GM12878 (cell line): ENCODE measurements at regions of chr17 and their contacts with region 1.

Region 1: DNA sequence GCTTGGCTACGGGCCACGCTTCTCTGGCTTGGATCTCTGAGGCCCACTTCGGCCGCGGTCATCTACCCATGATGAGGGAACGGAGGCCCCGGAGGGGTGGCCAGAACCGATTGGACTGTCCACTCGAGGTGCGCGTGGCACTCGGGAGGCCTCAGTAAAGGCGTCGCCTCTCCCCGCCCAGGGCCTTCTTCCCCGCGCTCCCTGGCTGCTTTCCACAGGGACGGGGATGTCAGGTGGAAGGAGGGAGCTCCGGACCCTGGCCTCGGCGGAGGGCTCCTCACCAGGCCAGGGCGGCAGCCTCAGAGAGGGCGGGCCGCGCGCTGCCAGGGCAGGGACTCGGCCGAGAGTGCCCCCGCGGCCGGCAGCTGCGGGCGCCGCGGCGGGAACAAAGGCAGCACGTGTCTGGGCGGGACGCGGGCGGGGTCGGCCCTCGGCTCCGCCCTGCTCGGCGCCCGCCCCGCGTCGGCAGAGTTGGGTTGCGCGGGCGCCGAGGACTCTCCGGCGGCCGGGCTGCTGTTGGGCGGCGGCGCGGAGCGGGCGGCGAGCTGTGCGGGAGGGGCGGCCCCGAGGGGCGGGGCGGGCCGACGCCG is 587 bp upstream of the CDK5R1 start:
- DNase-seq: no peak
- ATAC-seq: peak; percentile 62
- H3K4me3 ChIP-seq: peak overlapping the region; percentile 28; the same call in 1 of the 2 replicates
- H3K27ac ChIP-seq: 0 out of 2 replicates have a peak overlapping the region, but pooled peaks have one; percentile 33
- H3K4me1 ChIP-seq: peaks cover 11% of the 10 kb centered on the region
- H3K27me3 ChIP-seq: no peaks in the 10 kb centered on the region
- CTCF ChIP-seq: no peak
- EP300 ChIP-seq: no peak
- POLR2A ChIP-seq: peak; percentile 32; the same call in 1 of the 2 replicates
- RAD21 ChIP-seq: no peak

Region 2: DNA sequence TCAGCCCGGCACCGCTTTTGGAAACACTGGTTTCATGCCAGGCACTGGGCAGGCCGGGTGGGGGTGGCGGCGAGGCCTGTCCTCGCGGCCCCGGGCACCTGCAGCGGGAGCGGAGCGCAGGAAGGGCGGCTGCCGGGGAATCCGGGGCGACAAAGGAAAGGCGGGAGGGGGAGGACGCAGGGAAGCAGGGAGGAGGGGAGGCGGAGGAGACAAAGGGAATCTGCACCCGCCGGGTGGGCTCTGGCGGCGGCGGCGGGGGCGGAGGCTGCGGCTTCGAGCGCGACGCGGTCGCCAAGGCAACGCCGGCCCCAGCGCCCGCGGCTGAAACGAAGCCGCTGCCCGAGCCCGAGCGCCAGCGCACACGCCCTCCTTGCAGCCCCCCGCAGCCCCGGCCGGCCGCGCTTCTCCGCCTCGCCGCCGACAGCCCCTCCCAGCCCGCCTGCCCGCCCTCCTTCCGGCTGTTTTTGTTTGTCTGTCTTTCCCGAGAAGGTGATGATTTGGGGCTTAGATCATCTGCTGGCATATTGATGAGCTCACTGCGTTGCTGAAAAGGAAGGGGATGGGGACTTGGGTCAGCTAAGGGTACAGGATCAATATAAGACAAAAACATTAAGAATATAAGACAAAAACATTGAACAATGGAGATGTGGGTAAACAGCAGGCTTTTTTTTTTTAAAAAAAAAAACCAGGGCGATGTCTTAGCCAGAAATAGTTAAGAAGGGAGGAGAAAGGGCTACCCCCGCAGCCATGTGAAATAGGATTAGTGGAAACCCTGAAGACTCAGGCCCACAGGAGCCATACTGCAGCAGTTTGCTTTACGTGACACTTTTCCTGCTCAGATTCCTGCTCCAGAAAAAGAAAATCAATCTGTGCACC is 33.3 kb after region 1 on chr17:
- CTCF ChIA-PET with region 1: interaction called, 83 read pairs
- POLR2A ChIA-PET with region 1: interaction called, 308 read pairs
- RAD21 ChIA-PET with region 1: interaction called, 543 read pairs
- SMC1A ChIA-PET with region 1: interaction called, 286 read pairs
- in situ Hi-C with region 1: no loop called
- intact Hi-C with region 1: loop called (anchors 1 kb)
- DNase-seq: no peak
- ATAC-seq: peak; percentile 38
- H3K4me3 ChIP-seq: peak overlapping the region; percentile 25; the same call in 1 of the 2 replicates
- H3K27ac ChIP-seq: peak overlapping the region; percentile 84
- H3K4me1 ChIP-seq: peaks cover 88% of the 10 kb centered on the region
- H3K27me3 ChIP-seq: no peaks in the 10 kb centered on the region
- CTCF ChIP-seq: no peak
- EP300 ChIP-seq: no peak
- POLR2A ChIP-seq: peak; percentile 61; the same call in 1 of the 2 replicates
- RAD21 ChIP-seq: no peak

Region 3: GRCh38 chr17:32569171-32570080 is 83.2 kb after region 1 on chr17:
- CTCF ChIA-PET with region 1: interaction called, 17 read pairs
- POLR2A ChIA-PET with region 1: interaction called, 16 read pairs
- RAD21 ChIA-PET with region 1: interaction called, 19 read pairs
- SMC1A ChIA-PET with region 1: interaction called, 16 read pairs
- in situ Hi-C with region 1: no loop called
- intact Hi-C with region 1: no loop called
- DNase-seq: peak; percentile 90
- ATAC-seq: peak; percentile 81
- H3K4me3 ChIP-seq: no peak overlapping the region
- H3K27ac ChIP-seq: peak overlapping the region; percentile 99
- H3K4me1 ChIP-seq: peaks cover 51% of the 10 kb centered on the region
- H3K27me3 ChIP-seq: no peaks in the 10 kb centered on the region
- CTCF ChIP-seq: 0 out of 6 replicates have a peak, but pooled peaks of 1 of the 3 experiments have one; percentile 5
- EP300 ChIP-seq: peak; percentile 36 to 50; a peak in 3 of 4 replicates
- POLR2A ChIP-seq: no peak
- RAD21 ChIP-seq: no peak; the same call in none of the 2 replicates

Region 4: DNA sequence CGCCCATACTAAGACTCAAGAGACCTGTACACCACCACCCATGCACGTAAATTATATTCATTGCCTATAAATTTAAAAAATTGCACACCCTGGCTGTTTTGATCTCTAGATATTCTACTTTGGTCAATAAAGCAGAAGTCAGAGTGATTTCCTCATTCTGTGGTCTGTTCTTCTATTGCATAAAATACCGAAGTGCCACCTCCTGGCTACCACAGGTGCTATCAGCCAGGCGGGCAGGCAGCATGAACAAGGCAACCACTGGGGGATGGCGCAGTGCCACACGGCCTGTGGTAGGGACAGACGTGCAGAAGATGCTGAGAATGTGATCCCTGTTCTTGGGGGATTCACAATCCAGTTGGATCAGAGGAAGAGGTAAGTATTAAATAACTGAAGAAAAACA is 122.9 kb after region 1 on chr17:
- CTCF ChIA-PET with region 1: interaction called, 132 read pairs
- POLR2A ChIA-PET with region 1: interaction called, 4 read pairs
- RAD21 ChIA-PET with region 1: interaction called, 40 read pairs
- SMC1A ChIA-PET with region 1: interaction called, 39 read pairs
- in situ Hi-C with region 1: no loop called
- intact Hi-C with region 1: loop called (anchors 1 kb)
- DNase-seq: peak; percentile 59
- ATAC-seq: peak; percentile 100
- H3K4me3 ChIP-seq: no peak overlapping the region
- H3K27ac ChIP-seq: no peak overlapping the region
- H3K4me1 ChIP-seq: peaks cover 7% of the 10 kb centered on the region
- H3K27me3 ChIP-seq: no peaks in the 10 kb centered on the region
- CTCF ChIP-seq: peak; percentile 73 to 88 (median 78)
- EP300 ChIP-seq: no peak; a peak in 1 of 4 replicates
- POLR2A ChIP-seq: no peak
- RAD21 ChIP-seq: peak; percentile 88

Region 5: GRCh38 chr17:32769839-32770238 is 283.6 kb after region 1 on chr17:
- CTCF ChIA-PET with region 1: interaction called, 24 read pairs
- POLR2A ChIA-PET with region 1: no interaction called
- RAD21 ChIA-PET with region 1: interaction called, 3 read pairs
- SMC1A ChIA-PET with region 1: interaction called, 12 read pairs
- in situ Hi-C with region 1: no loop called
- intact Hi-C with region 1: no loop called
- DNase-seq: no peak
- ATAC-seq: no peak
- H3K4me3 ChIP-seq: no peak overlapping the region
- H3K27ac ChIP-seq: no peak overlapping the region
- H3K4me1 ChIP-seq: no peaks in the 10 kb centered on the region
- H3K27me3 ChIP-seq: no peaks in the 10 kb centered on the region
- CTCF ChIP-seq: 0 out of 6 replicates have a peak, but pooled peaks of 1 of the 3 experiments have one; percentile 12
- EP300 ChIP-seq: no peak
- POLR2A ChIP-seq: no peak
- RAD21 ChIP-seq: 0 out of 2 replicates have a peak, but pooled peaks have one; percentile 5

Region 6: DNA sequence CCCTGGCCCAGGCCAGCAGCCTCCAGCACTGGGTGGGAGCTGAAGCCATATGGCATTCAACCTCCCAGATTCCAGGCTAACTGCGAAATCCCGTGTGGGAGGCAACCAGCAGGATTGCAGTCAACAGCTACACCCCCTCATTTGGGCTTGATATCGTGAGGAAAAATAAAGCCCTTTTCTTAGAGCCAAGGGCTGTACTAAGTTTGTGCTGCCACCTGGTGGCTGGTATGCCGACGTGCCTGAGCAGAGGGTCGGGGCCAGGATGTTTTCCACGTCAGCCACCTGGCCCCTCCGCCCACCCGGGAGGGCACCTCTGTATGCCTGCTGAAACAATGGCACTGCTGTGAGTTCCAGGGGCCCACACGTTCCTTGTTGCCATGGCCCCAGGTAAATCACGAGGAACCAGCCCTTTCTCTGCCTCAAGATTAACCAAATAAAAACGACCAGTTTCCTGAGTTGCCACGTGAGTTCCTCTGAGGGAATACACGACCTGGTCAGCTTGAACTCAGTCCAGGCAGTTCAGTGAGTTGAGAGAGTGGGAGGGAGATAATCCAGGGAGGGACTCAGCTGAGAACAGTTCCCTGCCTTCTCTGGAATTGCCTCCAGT is 450.8 kb after region 1 on chr17:
- CTCF ChIA-PET with region 1: interaction called, 14 read pairs
- POLR2A ChIA-PET with region 1: no interaction called
- RAD21 ChIA-PET with region 1: interaction called, 4 read pairs
- SMC1A ChIA-PET with region 1: interaction called, 4 read pairs
- in situ Hi-C with region 1: no loop called
- intact Hi-C with region 1: no loop called
- DNase-seq: no peak
- ATAC-seq: peak; percentile 97
- H3K4me3 ChIP-seq: no peak overlapping the region
- H3K27ac ChIP-seq: no peak overlapping the region
- H3K4me1 ChIP-seq: no peaks in the 10 kb centered on the region
- H3K27me3 ChIP-seq: no peaks in the 10 kb centered on the region; a peak in 1 of 4 replicates
- CTCF ChIP-seq: peak; percentile 84 to 89 (median 86)
- EP300 ChIP-seq: no peak
- POLR2A ChIP-seq: no peak
- RAD21 ChIP-seq: peak; percentile 68